ENCODE measurements at regions of chr3 and their contacts with region 1.

Region 1: DNA sequence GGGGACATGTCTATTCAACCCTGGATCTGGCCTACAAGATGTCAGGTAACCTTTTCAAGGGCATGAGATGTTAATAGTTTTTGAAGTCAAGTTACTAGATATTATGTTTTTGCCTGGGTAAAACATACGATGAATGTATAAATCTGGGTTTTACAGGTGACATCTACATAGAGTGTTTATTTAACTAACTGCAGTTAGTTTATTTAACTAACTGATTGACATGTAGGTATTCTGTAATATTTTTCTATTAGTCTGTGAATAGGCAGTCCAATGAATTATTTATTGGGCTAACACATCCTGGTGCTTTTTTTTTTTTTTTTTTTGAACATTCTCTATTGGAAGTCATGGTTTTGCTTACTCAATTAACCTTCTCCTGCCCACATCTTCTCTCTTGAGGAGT is 38.7 kb upstream of the TNIK start:
- DNase-seq: no peak

Region 2: DNA sequence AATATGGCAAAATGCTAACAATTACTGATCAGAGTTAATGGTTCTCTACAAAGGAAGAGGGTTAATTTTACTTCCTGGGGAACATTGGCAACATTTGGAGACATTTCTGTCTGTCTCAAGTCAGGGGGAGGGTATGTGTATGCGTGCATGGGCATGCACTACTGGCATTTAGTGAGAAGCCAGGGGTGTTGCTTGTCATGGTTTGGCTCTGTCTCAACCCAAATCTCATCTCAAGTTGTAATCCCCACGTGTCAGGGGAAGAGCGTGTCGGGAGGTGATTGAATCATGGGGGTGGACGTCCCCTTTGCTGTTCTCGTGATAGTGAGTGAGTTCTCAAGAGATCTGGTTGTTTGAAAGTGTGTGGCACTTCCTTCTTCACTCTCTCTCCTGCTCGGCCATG is 10.4 kb before region 1 on chr3:
- intact Hi-C with region 1: loop called in 1 of 2 experiments (anchors 1 kb)
- DNase-seq: no peak

Region 3: GRCh38 chr3:171654809-171655208 is 155.9 kb after region 1 on chr3:
- intact Hi-C with region 1: no loop called
- DNase-seq: no peak

Measured in posterior vena cava (tissue), 2 donors.